PC-9 (cell line): ENCODE measurements at regions of chr3 and their contacts with region 1.

Region 1: DNA sequence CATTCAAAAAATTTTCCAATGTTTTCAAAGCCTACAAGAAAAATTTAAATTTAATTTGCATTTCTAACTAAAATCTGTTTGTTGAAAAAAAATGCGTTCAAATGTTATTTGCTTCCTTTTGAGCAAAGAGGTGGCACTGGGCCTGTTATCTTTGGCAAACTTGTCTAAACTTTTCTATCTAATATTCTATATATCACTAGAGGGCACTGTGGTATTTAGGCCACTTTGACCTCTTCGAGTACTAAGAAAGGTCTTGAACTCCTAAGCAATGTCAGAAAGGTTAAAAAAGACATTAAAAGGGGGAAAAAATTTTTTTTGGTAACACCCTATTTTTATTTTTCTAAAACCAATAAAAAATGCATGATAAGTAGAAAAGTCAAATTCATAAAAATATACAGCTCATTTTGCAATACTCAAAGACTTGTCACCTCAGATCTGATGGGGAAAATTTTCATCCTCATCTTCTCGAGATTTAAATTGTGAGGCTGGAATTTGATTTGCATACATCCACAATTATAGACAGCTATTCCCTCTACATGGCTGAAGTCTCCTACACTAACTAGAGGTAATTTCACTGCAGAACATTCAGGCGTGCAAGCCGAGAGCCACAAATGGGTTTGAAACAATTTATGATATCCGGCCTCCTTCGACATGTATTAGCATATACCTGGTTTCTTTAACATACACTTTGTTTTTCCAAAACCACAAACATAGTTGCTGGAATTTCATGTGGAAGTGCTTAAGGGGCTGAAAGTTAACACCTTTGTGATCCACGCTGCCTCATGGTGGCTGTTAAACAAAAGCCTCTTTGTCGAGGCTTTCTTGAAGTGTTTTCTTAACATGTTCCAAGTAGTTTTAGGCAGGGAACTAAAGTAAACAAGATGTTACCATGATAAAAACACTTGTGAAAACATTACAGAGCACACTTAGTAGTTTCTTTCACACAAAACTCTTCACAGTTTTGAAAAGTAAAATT is 576.4 kb downstream of the FOXP1 start:
- DNase-seq: no peak
- H3K4me3 ChIP-seq: no peak overlapping the region
- H3K27ac ChIP-seq: no peak overlapping the region
- H3K4me1 ChIP-seq: no peaks in the 10 kb centered on the region
- H3K27me3 ChIP-seq: no peaks in the 10 kb centered on the region
- CTCF ChIP-seq: peak; percentile 67

Region 2: DNA sequence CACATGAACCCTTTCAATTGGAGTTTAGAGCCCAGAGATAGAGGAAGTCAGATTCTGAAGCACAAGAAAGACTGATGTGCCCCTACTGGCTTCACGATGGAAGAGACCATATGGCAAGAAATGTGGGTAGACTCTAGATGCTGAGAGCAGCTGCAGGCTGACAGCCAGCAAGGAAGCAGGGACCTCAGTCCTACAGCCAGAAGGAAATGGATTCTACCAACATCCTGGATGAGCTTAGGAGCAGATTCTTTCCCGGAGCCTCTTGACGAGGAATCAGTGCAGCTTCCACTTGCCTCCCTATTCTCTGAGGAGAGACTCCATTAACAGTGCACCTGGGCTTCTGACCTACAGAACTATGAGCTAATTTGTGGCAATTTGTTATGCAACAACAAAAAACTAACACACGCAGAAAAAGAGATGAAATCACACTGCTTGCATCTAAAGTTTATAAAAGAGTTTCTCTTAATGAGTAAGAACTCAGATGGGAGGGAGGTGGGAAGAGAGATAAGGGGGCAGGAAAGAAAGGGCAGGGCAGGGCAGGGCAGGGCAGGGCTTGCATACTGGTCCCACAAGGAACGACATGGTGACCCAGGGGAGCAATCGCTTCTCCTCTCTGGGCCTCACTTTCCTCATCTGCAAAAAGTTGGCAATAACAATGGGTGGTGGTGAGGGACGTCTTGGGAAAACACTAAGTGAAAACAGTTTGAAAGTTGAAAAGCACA is 135.5 kb after region 1 on chr3:
- CTCF ChIA-PET with region 1: no interaction called
- POLR2A ChIA-PET with region 1: no interaction called
- intact Hi-C with region 1: loop called (anchors 5 kb)
- DNase-seq: no peak
- H3K4me3 ChIP-seq: no peak overlapping the region
- H3K27ac ChIP-seq: no peak overlapping the region
- H3K4me1 ChIP-seq: no peaks in the 10 kb centered on the region; the same call in 1 of the 2 replicates
- H3K27me3 ChIP-seq: no peaks in the 10 kb centered on the region
- CTCF ChIP-seq: no peak

Region 3: GRCh38 chr3:71285086-71285485 is 278.0 kb after region 1 on chr3:
- CTCF ChIA-PET with region 1: no interaction called
- POLR2A ChIA-PET with region 1: no interaction called
- intact Hi-C with region 1: no loop called
- DNase-seq: no peak
- H3K4me3 ChIP-seq: no peak overlapping the region
- H3K27ac ChIP-seq: no peak overlapping the region
- H3K4me1 ChIP-seq: no peaks in the 10 kb centered on the region
- H3K27me3 ChIP-seq: no peaks in the 10 kb centered on the region
- CTCF ChIP-seq: no peak

Region 4: GRCh38 chr3:71397046-71397445 is 389.9 kb after region 1 on chr3:
- CTCF ChIA-PET with region 1: no interaction called
- POLR2A ChIA-PET with region 1: no interaction called
- intact Hi-C with region 1: loop called (anchors 5 kb)
- DNase-seq: no peak
- H3K4me3 ChIP-seq: no peak overlapping the region
- H3K27ac ChIP-seq: no peak overlapping the region
- H3K4me1 ChIP-seq: no peaks in the 10 kb centered on the region
- H3K27me3 ChIP-seq: no peaks in the 10 kb centered on the region
- CTCF ChIP-seq: peak; percentile 58